T-cell (primary cell): ENCODE measurements at regions of chr10 and their contacts with region 1.

Region 1: GRCh38 chr10:88702848-88703597 is 3.0 kb upstream of the LIPK start:
- DNase-seq: no peak
- ATAC-seq: no peak
- H3K4me3 ChIP-seq: no peak overlapping the region
- H3K4me3 Mint-ChIP-seq: no peak overlapping the region
- H3K27ac ChIP-seq: no peak overlapping the region
- H3K27ac Mint-ChIP-seq: no peak overlapping the region
- H3K4me1 ChIP-seq: no peaks in the 10 kb centered on the region
- H3K4me1 Mint-ChIP-seq: peaks cover 0 to 4% (median 0%) of the 10 kb centered on the region in 3 donors
- H3K27me3 ChIP-seq: no peaks in the 10 kb centered on the region
- H3K27me3 Mint-ChIP-seq: no peaks in the 10 kb centered on the region

Region 2: DNA sequence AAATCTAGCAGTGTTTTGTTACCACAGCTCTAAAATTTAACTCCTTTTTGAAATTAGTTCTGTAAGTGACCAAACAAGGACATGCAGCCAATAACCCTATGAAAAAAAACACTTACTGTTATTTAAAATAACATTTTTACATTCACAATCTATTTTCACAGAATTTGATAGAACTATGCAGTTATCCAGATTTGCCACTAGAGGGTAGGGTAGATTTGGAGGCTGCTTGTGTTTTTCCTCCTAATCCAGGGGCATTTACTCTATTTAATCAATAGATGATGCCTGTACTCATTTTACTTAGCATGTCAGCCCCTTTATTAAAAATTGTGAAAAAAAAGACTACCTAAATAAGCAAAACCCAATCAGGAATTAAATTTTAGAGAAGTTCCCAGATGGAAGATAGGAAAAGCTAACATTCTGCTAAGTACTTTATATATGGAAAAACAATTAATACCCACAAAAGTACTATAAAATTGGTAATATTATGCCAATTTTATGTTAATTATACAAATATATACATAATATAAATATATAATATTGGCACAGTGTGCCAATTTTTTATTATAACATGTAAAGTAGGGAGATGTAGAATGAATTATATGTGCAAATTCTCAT is 15.1 kb before region 1 on chr10:
- CTCF ChIA-PET with region 1: interaction called in 1 of 2 experiments, 3 read pairs
- POLR2A ChIA-PET with region 1: interaction called in 1 of 2 experiments, 12 read pairs
- DNase-seq: peak in 1 of 35 experiments; percentile 38
- ATAC-seq: peak in 3 of 4 experiments; percentile 44 to 57 (median 53)
- H3K4me3 ChIP-seq: no peak overlapping the region
- H3K4me3 Mint-ChIP-seq: no peak overlapping the region
- H3K27ac ChIP-seq: no peak overlapping the region
- H3K27ac Mint-ChIP-seq: no peak overlapping the region
- H3K4me1 ChIP-seq: no peaks in the 10 kb centered on the region
- H3K4me1 Mint-ChIP-seq: no peaks in the 10 kb centered on the region
- H3K27me3 ChIP-seq: peaks cover 0 to 5% of the 10 kb centered on the region in 2 experiments
- H3K27me3 Mint-ChIP-seq: peaks cover 0 to 10% of the 10 kb centered on the region in 2 donors